Prostate gland (tissue), 2 donors: ENCODE measurements at regions of chr15 and their contacts with region 1.

Region 1: GRCh38 chr15:40344631-40345120 is 3.9 kb upstream of the CCDC9B start:
- DNase-seq: no peak
- H3K4me3 ChIP-seq: no peak overlapping the region
- H3K27ac ChIP-seq: no peak overlapping the region
- H3K4me1 ChIP-seq: peaks cover 15% of the 10 kb centered on the region
- H3K27me3 ChIP-seq: no peaks in the 10 kb centered on the region
- CTCF ChIP-seq: peak in 3 of 4 experiments; percentile 62 to 75 (median 67)
- POLR2A ChIP-seq: no peak

Region 2: DNA sequence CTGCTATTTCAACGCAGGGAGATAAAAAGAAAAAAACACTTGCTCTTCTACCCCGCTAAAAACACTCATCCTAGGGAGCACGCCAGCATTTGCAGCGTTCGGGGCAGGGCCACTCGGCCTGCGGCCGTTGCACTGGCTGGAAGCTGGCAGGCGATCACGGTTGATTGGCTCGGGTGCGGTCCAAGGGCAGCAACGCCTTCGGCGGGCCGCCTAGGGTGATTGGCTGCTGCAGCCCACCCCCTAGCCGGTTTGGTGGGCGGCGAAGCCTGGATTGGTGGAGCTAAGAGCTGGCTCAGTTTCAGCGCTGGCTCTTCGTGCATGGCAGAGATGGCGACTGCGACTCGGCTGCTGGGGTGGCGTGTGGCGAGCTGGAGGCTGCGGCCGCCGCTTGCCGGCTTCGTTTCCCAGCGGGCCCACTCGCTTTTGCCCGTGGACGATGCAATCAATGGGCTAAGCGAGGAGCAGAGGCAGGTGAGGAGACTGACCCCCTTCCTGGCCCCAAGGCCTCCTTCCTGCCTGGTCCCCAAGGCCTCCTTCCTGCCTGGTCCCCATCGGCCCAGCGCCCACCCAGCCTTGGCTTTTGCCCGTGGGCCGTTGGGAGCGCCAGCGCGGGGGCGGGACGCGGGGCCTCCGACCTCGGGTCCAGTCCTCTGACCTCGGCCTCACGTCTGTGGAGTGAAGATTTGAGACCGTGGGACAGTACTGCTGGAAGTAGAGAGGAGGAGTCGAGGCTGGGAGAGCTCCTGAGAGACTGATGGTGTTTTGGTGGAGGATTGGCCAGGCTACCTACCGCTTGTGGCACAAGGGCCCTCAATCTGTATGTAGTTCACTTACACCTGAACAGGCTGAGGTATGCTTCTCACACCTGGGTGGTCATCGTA is 61.1 kb after region 1 on chr15 and contains the start of gene IVD:
- intact Hi-C with region 1: loop called (anchors 5 kb)
- DNase-seq: peak; percentile 95
- H3K4me3 ChIP-seq: peak within 1 kb of the TSS; percentile 57 to 80
- H3K27ac ChIP-seq: peak within 1 kb of the TSS; percentile 63 to 84
- H3K4me1 ChIP-seq: peaks cover 4% of the 10 kb centered on the region
- H3K27me3 ChIP-seq: no peaks in the 10 kb centered on the region
- CTCF ChIP-seq: peak in 1 of 4 experiments; percentile 5
- POLR2A ChIP-seq: no peak
- total RNA-seq, gene IVD: 112 to 115 TPM